ENCODE measurements at regions of chr1 and their contacts with region 1.

Region 1: GRCh38 chr1:167447521-167448136 is 70.7 kb downstream of the CD247 start:
- DNase-seq: no peak
- ATAC-seq: peak; percentile 94
- H3K4me3 Mint-ChIP-seq: peak overlapping the region; percentile 61
- H3K27ac Mint-ChIP-seq: peak overlapping the region; percentile 70
- H3K4me1 Mint-ChIP-seq: peaks cover 25% of the 10 kb centered on the region
- H3K27me3 Mint-ChIP-seq: no peaks in the 10 kb centered on the region
- CTCF ChIP-seq: no peak

Region 2: GRCh38 chr1:167430134-167430856 is 17.3 kb before region 1 on chr1:
- CTCF ChIA-PET with region 1: interaction called, 18 read pairs
- POLR2A ChIA-PET with region 1: interaction called, 3 read pairs
- intact Hi-C with region 1: loop called (anchors 2 kb)
- DNase-seq: no peak
- ATAC-seq: peak; percentile 35
- H3K4me3 Mint-ChIP-seq: peak overlapping the region; percentile 61
- H3K27ac Mint-ChIP-seq: peak overlapping the region; percentile 90
- H3K4me1 Mint-ChIP-seq: peaks cover 53% of the 10 kb centered on the region
- H3K27me3 Mint-ChIP-seq: no peaks in the 10 kb centered on the region
- CTCF ChIP-seq: no peak

Measured in activated B cell treated with CpG ODN at 0.5 μM for 24 hours (primary cell).